Spleen (tissue), 13 donors: ENCODE measurements at regions of chr7 and their contacts with region 1.

Region 1: GRCh38 chr7:17523813-17524741 is 225.6 kb downstream of the AHR start:
- DNase-seq: no peak
- H3K4me3 ChIP-seq: no peak overlapping the region
- H3K27ac ChIP-seq: no peak overlapping the region
- H3K4me1 ChIP-seq: peaks cover 0 to 4% (median 0%) of the 10 kb centered on the region in 6 donors
- H3K27me3 ChIP-seq: no peaks in the 10 kb centered on the region
- CTCF ChIP-seq: no peak
- POLR2A ChIP-seq: no peak

Region 2: DNA sequence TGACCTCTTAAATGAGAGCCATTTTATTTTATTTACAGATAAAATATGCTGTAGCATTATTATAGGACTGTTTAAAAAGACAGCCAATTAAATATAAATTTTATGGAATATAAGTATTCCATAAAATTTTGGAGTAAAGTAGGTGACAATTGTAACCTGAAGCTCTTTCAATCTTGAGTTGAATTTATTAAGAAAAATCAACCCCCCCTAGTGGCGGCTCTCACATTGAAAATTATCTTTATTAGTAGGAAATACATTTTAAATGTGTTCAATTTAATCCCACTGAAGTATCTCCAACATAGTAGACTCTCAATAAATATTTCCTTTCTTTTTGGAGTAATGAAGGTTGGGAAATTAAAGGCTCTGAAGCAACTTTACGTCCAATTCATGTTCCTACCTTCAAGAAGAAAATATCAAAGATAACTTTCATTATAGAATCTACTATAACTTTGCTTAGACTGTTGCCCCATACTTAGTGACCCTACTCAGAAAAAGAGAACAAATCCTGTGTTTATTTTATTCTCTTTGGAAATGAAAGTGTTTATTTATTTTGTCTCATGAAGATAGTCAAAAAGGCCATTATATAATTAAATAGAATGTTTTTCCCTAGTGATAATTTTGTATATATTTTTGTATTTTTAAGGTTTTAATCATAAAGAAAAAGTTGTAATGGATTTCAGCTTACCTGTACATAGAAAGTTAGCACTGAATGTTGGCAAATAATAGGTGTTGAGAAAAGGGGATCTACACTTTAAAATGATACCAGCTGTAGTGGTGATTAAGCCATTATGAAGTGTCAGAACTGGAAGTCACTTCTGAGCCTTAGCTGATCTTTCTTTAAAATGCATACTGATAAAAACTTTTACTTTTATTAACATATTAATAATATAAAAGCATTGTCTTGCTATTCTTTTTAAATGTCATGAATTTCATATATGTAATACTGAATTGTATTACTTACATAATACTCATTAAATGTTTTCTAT is 222.3 kb before region 1 on chr7:
- intact Hi-C with region 1: loop called (anchors 10 kb)
- DNase-seq: no peak
- H3K4me3 ChIP-seq: peak overlapping the region in 7 of 8 donors; percentile 73 to 91 (median 86)
- H3K27ac ChIP-seq: peak overlapping the region in 7 of 8 donors; percentile 36 to 96 (median 94)
- H3K4me1 ChIP-seq: peaks cover 21 to 91% (median 66%) of the 10 kb centered on the region in 6 donors
- H3K27me3 ChIP-seq: no peaks in the 10 kb centered on the region
- CTCF ChIP-seq: peak in 7 of 11 experiments; percentile 34 to 71 (median 55)
- POLR2A ChIP-seq: no peak

Region 3: GRCh38 chr7:17408245-17408903 is 115.7 kb before region 1 on chr7:
- intact Hi-C with region 1: no loop called
- DNase-seq: no peak
- H3K4me3 ChIP-seq: no peak overlapping the region
- H3K27ac ChIP-seq: peak overlapping the region in 2 of 8 donors; percentile 7 to 17
- H3K4me1 ChIP-seq: peaks cover 7 to 35% (median 15%) of the 10 kb centered on the region in 6 donors
- H3K27me3 ChIP-seq: no peaks in the 10 kb centered on the region
- CTCF ChIP-seq: no peak
- POLR2A ChIP-seq: no peak

Region 4: GRCh38 chr7:17512181-17512675 is 11.8 kb before region 1 on chr7:
- intact Hi-C with region 1: loop called (anchors 2 kb)
- DNase-seq: no peak
- H3K4me3 ChIP-seq: no peak overlapping the region
- H3K27ac ChIP-seq: no peak overlapping the region
- H3K4me1 ChIP-seq: no peaks in the 10 kb centered on the region
- H3K27me3 ChIP-seq: no peaks in the 10 kb centered on the region
- CTCF ChIP-seq: no peak
- POLR2A ChIP-seq: no peak